ENCODE measurements at regions of chr1 and their contacts with region 1.

Region 1: DNA sequence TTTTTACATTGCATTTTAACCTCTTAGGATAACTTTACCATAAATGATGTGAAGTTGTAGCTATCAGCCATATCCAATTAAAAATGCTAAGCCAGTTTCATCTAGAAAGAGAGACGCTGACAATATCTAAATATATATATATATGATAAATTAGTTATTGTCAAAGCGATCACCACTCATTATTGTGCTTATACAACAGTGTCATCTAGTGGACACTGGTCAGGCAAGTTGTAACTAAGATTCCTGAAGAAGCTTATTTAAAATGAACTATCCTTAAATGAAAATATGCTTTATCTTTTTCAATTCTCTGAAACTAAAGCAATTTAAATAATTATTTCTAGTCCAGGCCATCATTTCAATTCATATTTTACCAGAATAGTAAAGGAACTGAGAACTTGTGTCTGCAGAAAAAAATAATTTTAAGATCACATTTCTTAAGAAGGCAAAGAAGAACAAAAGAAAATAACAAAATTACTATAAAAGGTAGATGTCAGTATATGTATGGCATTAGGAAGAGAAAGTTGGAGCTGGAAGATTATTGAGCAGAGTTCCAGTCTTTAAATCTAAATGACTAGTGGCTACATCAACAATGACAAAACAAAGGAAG is 193.3 kb upstream of the SNX7 start:
- DNase-seq: peak; percentile 9
- H3K4me3 Mint-ChIP-seq: no peak overlapping the region
- H3K27ac Mint-ChIP-seq: no peak overlapping the region
- H3K4me1 Mint-ChIP-seq: peaks cover 22% of the 10 kb centered on the region
- H3K27me3 Mint-ChIP-seq: no peaks in the 10 kb centered on the region
- CTCF ChIP-seq: peak; percentile 59

Region 2: GRCh38 chr1:98001764-98002163 is 466.4 kb before region 1 on chr1:
- CTCF ChIA-PET with region 1: interaction called, 3 read pairs
- intact Hi-C with region 1: loop called (anchors 2 kb)
- DNase-seq: no peak
- H3K4me3 Mint-ChIP-seq: no peak overlapping the region
- H3K27ac Mint-ChIP-seq: no peak overlapping the region
- H3K4me1 Mint-ChIP-seq: peaks cover 9% of the 10 kb centered on the region
- H3K27me3 Mint-ChIP-seq: no peaks in the 10 kb centered on the region
- CTCF ChIP-seq: no peak

Region 3: GRCh38 chr1:98188774-98189173 is 279.4 kb before region 1 on chr1:
- CTCF ChIA-PET with region 1: no interaction called
- intact Hi-C with region 1: no loop called
- DNase-seq: no peak
- H3K4me3 Mint-ChIP-seq: no peak overlapping the region
- H3K27ac Mint-ChIP-seq: no peak overlapping the region
- H3K4me1 Mint-ChIP-seq: no peaks in the 10 kb centered on the region
- H3K27me3 Mint-ChIP-seq: no peaks in the 10 kb centered on the region
- CTCF ChIP-seq: no peak

Region 4: DNA sequence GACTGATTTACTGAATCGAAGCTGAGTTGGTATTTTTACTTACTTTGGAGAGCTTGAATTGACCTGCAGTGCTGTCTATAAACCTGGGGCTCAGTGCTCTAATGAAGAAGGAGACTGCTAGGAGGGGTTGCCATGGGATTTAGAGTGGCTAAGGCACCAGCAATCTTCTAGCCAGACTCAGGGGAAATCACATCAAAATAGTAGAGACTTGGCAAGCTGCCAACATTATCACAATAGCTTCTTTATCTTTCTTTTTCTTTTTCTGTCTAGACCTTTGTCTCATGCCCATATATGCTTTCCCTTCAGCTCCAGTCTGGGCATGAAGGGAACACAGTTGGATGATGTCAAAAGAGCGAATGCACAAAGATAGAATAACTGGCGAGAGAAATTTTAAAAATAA is 246.3 kb before region 1 on chr1:
- CTCF ChIA-PET with region 1: no interaction called
- intact Hi-C with region 1: loop called (anchors 10 kb)
- DNase-seq: no peak
- H3K4me3 Mint-ChIP-seq: no peak overlapping the region
- H3K27ac Mint-ChIP-seq: peak overlapping the region; percentile 17
- H3K4me1 Mint-ChIP-seq: peaks cover 17% of the 10 kb centered on the region
- H3K27me3 Mint-ChIP-seq: no peaks in the 10 kb centered on the region
- CTCF ChIP-seq: no peak

Region 5: GRCh38 chr1:98260839-98261238 is 207.4 kb before region 1 on chr1:
- CTCF ChIA-PET with region 1: no interaction called
- intact Hi-C with region 1: loop called (anchors 10 kb)
- DNase-seq: no peak
- H3K4me3 Mint-ChIP-seq: no peak overlapping the region
- H3K27ac Mint-ChIP-seq: no peak overlapping the region
- H3K4me1 Mint-ChIP-seq: peaks cover 15% of the 10 kb centered on the region
- H3K27me3 Mint-ChIP-seq: no peaks in the 10 kb centered on the region
- CTCF ChIP-seq: no peak

Region 6: DNA sequence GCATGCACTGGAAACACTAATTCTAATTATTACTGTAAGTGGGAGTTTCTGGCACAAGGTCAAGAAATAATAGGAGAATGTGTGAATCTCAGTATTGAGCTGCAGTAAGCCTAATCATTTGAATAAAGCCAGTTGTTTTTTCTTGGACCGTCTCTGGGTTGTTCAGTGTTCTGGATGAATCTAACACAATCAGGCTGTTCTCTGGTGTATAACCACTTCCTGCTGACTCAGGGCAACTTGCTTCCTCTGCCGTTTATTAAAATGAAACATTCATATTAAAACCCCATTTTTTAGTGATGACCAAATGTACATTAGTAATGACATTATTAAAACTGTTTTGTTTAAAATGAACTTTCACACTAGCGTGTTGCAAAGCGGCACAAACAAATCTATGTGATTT is 79.8 kb before region 1 on chr1:
- CTCF ChIA-PET with region 1: no interaction called
- intact Hi-C with region 1: no loop called
- DNase-seq: no peak
- H3K4me3 Mint-ChIP-seq: no peak overlapping the region
- H3K27ac Mint-ChIP-seq: no peak overlapping the region
- H3K4me1 Mint-ChIP-seq: peaks cover 10% of the 10 kb centered on the region
- H3K27me3 Mint-ChIP-seq: no peaks in the 10 kb centered on the region
- CTCF ChIP-seq: no peak

Region 7: GRCh38 chr1:98452162-98452561 is 16.1 kb before region 1 on chr1:
- CTCF ChIA-PET with region 1: no interaction called
- intact Hi-C with region 1: no loop called
- DNase-seq: no peak
- H3K4me3 Mint-ChIP-seq: no peak overlapping the region
- H3K27ac Mint-ChIP-seq: peak overlapping the region; percentile 61
- H3K4me1 Mint-ChIP-seq: peaks cover 13% of the 10 kb centered on the region
- H3K27me3 Mint-ChIP-seq: no peaks in the 10 kb centered on the region
- CTCF ChIP-seq: no peak

Measured in Calu3 (cell line).